Natural killer cell (primary cell): ENCODE measurements at regions of chr4 and their contacts with region 1.

Region 1: DNA sequence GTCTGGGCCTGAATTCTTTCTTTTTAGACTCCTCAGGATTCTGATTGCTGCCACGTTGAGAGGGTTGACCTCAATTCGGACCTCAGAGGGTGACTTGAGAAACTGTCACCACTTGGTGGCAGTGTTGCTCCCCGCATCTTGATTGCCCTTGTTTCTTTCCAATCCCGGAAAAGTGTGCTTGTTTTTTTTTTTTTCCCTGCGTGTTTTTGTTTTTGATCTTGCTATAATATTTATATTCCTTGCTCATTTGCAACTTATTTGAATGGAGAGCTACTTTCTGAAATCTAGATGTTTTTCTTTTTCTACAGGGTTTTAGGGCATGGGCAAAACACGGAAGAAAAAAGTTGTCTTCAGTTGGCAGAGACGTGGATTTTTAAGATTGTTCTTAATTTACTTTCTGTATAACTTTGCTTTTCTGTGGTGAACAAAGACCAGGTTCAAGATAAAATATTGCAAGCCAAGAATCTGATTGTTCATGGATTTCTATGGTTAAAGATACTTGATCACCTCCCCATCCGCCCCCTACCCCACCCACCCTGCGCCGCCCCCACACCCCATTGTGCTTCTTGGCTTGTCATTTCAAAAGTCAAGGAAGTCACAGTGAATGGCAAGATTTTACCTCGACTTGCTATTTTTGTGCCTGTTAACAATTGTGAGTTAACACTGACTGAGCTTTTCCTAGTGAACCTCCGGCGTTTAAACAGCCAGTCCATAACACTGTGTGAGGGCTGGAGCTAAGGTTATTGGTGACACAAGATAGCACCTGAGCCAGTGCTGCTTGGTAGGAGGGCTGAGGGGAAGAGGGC is 102.1 kb downstream of the PTTG2 start:
- DNase-seq: peak; percentile 59 to 84
- ATAC-seq: peak; percentile 73 to 86 (median 85)
- H3K4me3 ChIP-seq: peak overlapping the region; percentile 21
- H3K4me3 Mint-ChIP-seq: peak overlapping the region; percentile 92
- H3K27ac ChIP-seq: no peak overlapping the region
- H3K27ac Mint-ChIP-seq: peak overlapping the region; percentile 65 to 74
- H3K4me1 ChIP-seq: peaks cover 2% of the 10 kb centered on the region
- H3K4me1 Mint-ChIP-seq: peaks cover 6 to 8% of the 10 kb centered on the region in 2 donors
- H3K27me3 ChIP-seq: no peaks in the 10 kb centered on the region
- H3K27me3 Mint-ChIP-seq: no peaks in the 10 kb centered on the region
- CTCF ChIP-seq: peak; percentile 90

Region 2: GRCh38 chr4:37873386-37873785 is 188.9 kb before region 1 on chr4:
- intact Hi-C with region 1: no loop called
- DNase-seq: no peak
- ATAC-seq: no peak
- H3K4me3 ChIP-seq: no peak overlapping the region
- H3K4me3 Mint-ChIP-seq: no peak overlapping the region
- H3K27ac ChIP-seq: no peak overlapping the region
- H3K27ac Mint-ChIP-seq: no peak overlapping the region
- H3K4me1 ChIP-seq: no peaks in the 10 kb centered on the region
- H3K4me1 Mint-ChIP-seq: no peaks in the 10 kb centered on the region
- H3K27me3 ChIP-seq: no peaks in the 10 kb centered on the region
- H3K27me3 Mint-ChIP-seq: no peaks in the 10 kb centered on the region
- CTCF ChIP-seq: no peak

Region 3: GRCh38 chr4:38132107-38132673 is 69.9 kb after region 1 on chr4:
- intact Hi-C with region 1: loop called (anchors 5 kb)
- DNase-seq: peak; percentile 63 to 90
- ATAC-seq: peak; percentile 57 to 82 (median 78)
- H3K4me3 ChIP-seq: no peak overlapping the region
- H3K4me3 Mint-ChIP-seq: peak overlapping the region; percentile 76
- H3K27ac ChIP-seq: peak overlapping the region; percentile 85
- H3K27ac Mint-ChIP-seq: peak overlapping the region; percentile 96 to 99
- H3K4me1 ChIP-seq: peaks cover 55% of the 10 kb centered on the region
- H3K4me1 Mint-ChIP-seq: peaks cover 65 to 68% of the 10 kb centered on the region in 2 donors
- H3K27me3 ChIP-seq: no peaks in the 10 kb centered on the region
- H3K27me3 Mint-ChIP-seq: no peaks in the 10 kb centered on the region
- CTCF ChIP-seq: no peak

Region 4: DNA sequence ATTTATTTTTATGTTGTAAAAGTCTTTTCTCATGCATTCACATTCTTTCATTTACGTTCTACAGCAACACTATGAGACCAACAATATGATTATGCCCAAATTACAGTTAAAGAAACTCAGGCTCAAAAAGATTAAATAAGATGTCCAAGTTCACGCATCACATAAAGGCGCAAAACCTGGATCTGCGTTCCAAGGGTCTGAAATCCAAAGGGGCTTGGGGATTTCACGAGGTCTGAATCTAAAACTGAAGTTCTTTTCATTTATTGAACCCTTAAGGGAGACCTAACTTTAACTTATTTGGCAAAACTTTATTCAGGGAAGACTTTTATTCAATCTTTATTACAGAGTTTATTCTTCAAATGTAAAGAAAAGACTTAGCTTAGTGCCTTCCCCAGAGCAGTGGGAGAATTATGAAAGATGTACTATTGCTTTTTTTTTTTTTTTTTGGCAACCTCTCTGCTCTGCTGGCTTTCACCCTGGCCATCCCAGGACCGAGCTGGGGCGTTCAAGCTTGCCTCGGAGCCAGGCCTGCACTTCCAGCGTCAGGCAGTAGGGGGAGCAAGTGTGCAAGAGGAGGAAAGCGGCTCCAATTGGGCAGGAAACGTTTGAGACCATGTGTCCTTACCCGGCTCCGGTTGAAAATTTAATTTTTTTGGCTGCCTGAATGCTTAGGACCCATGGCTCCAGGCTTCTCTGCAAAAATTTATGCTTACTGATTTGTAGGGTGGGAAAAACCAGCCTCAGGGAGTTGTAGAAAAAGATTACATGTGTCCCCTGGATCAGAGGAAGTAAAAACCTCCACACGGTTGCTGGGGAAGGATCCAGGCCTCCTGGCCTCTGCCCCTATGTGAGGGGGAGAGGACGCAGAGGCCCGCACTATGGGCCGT is 257.4 kb after region 1 on chr4:
- intact Hi-C with region 1: loop called (anchors 10 kb)
- DNase-seq: peak; percentile 87 to 92
- ATAC-seq: peak; percentile 84 to 90 (median 87)
- H3K4me3 ChIP-seq: peak overlapping the region; percentile 33
- H3K4me3 Mint-ChIP-seq: peak overlapping the region; percentile 88
- H3K27ac ChIP-seq: peak overlapping the region; percentile 84
- H3K27ac Mint-ChIP-seq: peak overlapping the region; percentile 86 to 91
- H3K4me1 ChIP-seq: peaks cover 26% of the 10 kb centered on the region
- H3K4me1 Mint-ChIP-seq: peaks cover 26 to 34% of the 10 kb centered on the region in 2 donors
- H3K27me3 ChIP-seq: no peaks in the 10 kb centered on the region
- H3K27me3 Mint-ChIP-seq: no peaks in the 10 kb centered on the region
- CTCF ChIP-seq: peak; percentile 94

Region 5: GRCh38 chr4:38531141-38531727 is 468.9 kb after region 1 on chr4:
- intact Hi-C with region 1: no loop called
- DNase-seq: no peak
- ATAC-seq: no peak
- H3K4me3 ChIP-seq: no peak overlapping the region
- H3K4me3 Mint-ChIP-seq: no peak overlapping the region
- H3K27ac ChIP-seq: no peak overlapping the region
- H3K27ac Mint-ChIP-seq: no peak overlapping the region
- H3K4me1 ChIP-seq: peaks cover 16% of the 10 kb centered on the region
- H3K4me1 Mint-ChIP-seq: peaks cover 14 to 16% of the 10 kb centered on the region in 2 donors
- H3K27me3 ChIP-seq: no peaks in the 10 kb centered on the region
- H3K27me3 Mint-ChIP-seq: peaks cover 3 to 9% of the 10 kb centered on the region in 2 donors
- CTCF ChIP-seq: no peak

Region 6: DNA sequence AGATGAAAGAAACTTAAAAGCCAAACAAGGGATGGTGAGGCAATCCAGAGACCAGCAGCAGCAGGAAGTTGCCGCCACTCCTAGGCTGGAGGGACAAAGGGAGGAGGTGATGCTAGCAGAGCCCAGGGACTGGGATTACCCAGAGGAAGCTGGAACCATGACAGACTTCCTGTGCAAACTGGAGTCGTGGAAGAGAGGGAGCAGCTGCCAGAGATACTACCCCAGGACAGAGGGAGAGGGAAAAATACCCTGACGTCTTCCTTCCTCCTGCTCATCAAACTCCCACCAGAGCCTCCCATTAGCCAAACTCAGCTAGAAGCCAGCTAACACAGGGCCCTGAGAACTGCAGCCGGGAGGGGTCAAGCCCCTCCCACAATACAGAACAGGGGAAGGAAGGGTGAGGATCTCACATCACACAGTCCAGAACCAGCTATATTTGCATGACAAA is 500.5 kb after region 1 on chr4:
- intact Hi-C with region 1: no loop called
- DNase-seq: no peak
- ATAC-seq: no peak
- H3K4me3 ChIP-seq: no peak overlapping the region
- H3K4me3 Mint-ChIP-seq: no peak overlapping the region
- H3K27ac ChIP-seq: no peak overlapping the region
- H3K27ac Mint-ChIP-seq: no peak overlapping the region
- H3K4me1 ChIP-seq: no peaks in the 10 kb centered on the region
- H3K4me1 Mint-ChIP-seq: peaks cover 0 to 13% of the 10 kb centered on the region in 2 donors
- H3K27me3 ChIP-seq: no peaks in the 10 kb centered on the region
- H3K27me3 Mint-ChIP-seq: peaks cover 0 to 7% of the 10 kb centered on the region in 2 donors
- CTCF ChIP-seq: no peak

Region 7: DNA sequence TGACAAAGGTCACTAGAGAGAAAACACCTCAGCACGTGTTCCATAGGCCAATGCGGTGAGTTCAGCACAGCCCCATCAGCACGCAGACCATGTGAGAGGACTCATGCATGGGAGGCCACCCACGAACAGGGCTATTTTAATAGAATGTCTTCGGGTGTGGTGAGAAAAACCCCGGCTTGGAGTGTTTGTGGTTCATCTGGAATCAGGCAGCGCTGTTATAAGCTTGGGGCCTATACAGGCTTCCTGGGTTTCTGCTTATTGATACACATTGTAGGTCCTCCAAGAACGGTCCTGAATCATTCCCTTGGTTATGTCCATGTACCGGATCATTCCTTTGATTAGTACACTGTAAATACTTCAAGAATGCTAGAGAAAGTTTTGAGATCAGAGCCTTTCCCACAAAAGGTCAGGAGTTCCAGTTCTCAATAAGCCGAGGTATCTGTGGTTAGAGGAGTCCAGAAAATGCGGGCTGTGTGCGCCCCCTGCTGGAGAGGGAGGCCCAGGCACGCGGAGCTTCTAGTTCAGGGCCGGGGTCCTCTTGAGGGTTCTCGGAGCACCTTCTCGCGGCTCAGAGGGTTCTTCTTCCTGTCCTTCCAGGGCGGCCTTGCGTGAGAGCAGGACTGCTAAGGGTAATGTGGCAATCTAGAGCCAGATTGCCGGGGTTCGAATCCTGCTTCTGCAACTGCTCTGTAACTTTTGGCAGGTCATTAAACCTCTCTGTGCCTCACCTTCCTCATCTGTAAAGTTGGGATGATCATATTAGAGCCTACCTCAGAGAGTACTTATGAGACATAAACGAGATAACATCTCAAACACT is 668.7 kb after region 1 on chr4:
- intact Hi-C with region 1: loop called (anchors 1 kb)
- DNase-seq: peak; percentile 79 to 89
- ATAC-seq: peak; percentile 65 to 76 (median 75)
- H3K4me3 ChIP-seq: no peak overlapping the region
- H3K4me3 Mint-ChIP-seq: no peak overlapping the region
- H3K27ac ChIP-seq: no peak overlapping the region
- H3K27ac Mint-ChIP-seq: peak overlapping the region in 1 of 2 donors; percentile 61
- H3K4me1 ChIP-seq: peaks cover 22% of the 10 kb centered on the region
- H3K4me1 Mint-ChIP-seq: peaks cover 29 to 45% of the 10 kb centered on the region in 2 donors
- H3K27me3 ChIP-seq: peaks cover 2% of the 10 kb centered on the region
- H3K27me3 Mint-ChIP-seq: peaks cover 3 to 11% of the 10 kb centered on the region in 2 donors
- CTCF ChIP-seq: peak; percentile 98

Region 8: GRCh38 chr4:38856524-38857337 is 794.4 kb after region 1 on chr4 and contains the start of gene TLR6:
- intact Hi-C with region 1: loop called (anchors 5 kb)
- DNase-seq: peak in 1 of 2 donors; percentile 89
- ATAC-seq: peak; percentile 77 to 81 (median 79)
- H3K4me3 ChIP-seq: peak within 1 kb of the TSS; percentile 48
- H3K4me3 Mint-ChIP-seq: peak within 1 kb of the TSS; percentile 92
- H3K27ac ChIP-seq: peak within 1 kb of the TSS; percentile 65
- H3K27ac Mint-ChIP-seq: peak within 1 kb of the TSS; percentile 78 to 84
- H3K4me1 ChIP-seq: peaks cover 13% of the 10 kb centered on the region
- H3K4me1 Mint-ChIP-seq: peaks cover 0 to 13% of the 10 kb centered on the region in 2 donors
- H3K27me3 ChIP-seq: no peaks in the 10 kb centered on the region
- H3K27me3 Mint-ChIP-seq: peaks cover 8 to 10% of the 10 kb centered on the region in 2 donors
- CTCF ChIP-seq: peak; percentile 83
- total RNA-seq, gene TLR6: 6.3 to 9.8 (median 6.8) TPM